ENCODE measurements at regions of chr15 and their contacts with region 1.

Region 1: GRCh38 chr15:26382444-26383075 is 390.3 kb downstream of the GABRB3 start:
- DNase-seq: no peak
- ATAC-seq: no peak
- H3K4me3 ChIP-seq: no peak overlapping the region
- H3K27ac ChIP-seq: no peak overlapping the region
- H3K4me1 ChIP-seq: no peaks in the 10 kb centered on the region
- H3K27me3 ChIP-seq: no peaks in the 10 kb centered on the region; a peak in 1 of 5 replicates
- CTCF ChIP-seq: no peak
- EP300 ChIP-seq: no peak
- POLR2A ChIP-seq: no peak
- RAD21 ChIP-seq: no peak

Region 2: DNA sequence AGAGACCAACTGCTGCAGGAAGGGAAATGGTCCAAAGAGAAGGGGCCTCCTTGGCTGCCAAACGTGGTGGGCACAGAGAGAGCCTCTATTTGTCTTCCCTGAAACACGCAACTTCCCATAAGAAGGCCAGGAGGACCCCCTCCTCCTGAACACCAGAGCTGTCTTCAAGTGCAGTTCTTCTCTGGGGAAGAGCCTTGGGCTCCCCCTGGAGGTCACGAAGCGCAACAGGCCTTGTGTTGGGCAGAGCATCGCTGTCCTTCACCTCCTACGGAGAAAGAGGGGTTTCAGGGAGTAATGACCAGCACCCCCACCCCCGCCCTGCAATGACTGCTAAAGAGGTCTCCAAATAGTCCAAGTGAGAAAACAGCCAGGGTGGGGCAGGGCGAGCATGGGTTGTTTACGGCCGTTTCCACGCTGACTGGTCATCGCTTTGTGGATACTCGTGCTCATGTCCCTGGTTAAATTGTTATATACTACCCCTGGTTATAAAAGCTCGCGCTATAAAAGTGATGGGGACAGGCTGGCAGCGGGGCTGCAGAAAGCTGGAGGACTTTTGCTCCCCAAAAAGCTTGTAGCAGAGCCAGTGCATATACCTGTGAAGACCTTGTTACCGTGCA is 121.9 kb before region 1 on chr15:
- CTCF ChIA-PET with region 1: no interaction called
- POLR2A ChIA-PET with region 1: no interaction called
- in situ Hi-C with region 1: no loop called
- intact Hi-C with region 1: no loop called
- DNase-seq: peak; percentile 41 to 55 (median 48)
- ATAC-seq: peak; percentile 93
- H3K4me3 ChIP-seq: no peak overlapping the region
- H3K27ac ChIP-seq: no peak overlapping the region
- H3K4me1 ChIP-seq: no peaks in the 10 kb centered on the region
- H3K27me3 ChIP-seq: no peaks in the 10 kb centered on the region
- CTCF ChIP-seq: peak; percentile 60 to 75 (median 71)
- EP300 ChIP-seq: no peak
- POLR2A ChIP-seq: no peak
- RAD21 ChIP-seq: peak; percentile 44 to 62

Region 3: DNA sequence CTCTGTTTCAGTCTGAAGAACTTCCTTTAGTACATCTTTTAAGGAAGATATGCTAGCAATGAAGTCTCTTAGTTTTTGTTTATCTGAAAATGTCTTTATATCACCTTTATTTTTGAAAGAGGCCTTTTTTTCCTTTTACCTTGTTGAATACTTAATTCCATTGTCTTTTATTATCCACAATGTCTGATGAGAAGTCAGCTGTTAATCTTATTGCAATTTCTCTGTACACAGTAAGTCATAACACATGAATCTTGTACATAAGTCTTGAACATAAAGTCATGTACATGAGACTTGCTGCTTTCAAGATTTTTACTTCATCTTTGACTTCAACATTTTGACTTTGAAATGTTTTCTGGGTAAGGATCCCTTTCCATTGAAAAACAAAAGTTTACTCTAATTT is 95.2 kb before region 1 on chr15:
- CTCF ChIA-PET with region 1: no interaction called
- POLR2A ChIA-PET with region 1: no interaction called
- in situ Hi-C with region 1: no loop called
- intact Hi-C with region 1: no loop called
- DNase-seq: no peak
- ATAC-seq: no peak
- H3K4me3 ChIP-seq: no peak overlapping the region
- H3K27ac ChIP-seq: no peak overlapping the region
- H3K4me1 ChIP-seq: no peaks in the 10 kb centered on the region
- H3K27me3 ChIP-seq: no peaks in the 10 kb centered on the region
- CTCF ChIP-seq: no peak
- EP300 ChIP-seq: no peak
- POLR2A ChIP-seq: no peak
- RAD21 ChIP-seq: no peak

Region 4: GRCh38 chr15:26449291-26449690 is 66.7 kb after region 1 on chr15:
- CTCF ChIA-PET with region 1: no interaction called
- POLR2A ChIA-PET with region 1: no interaction called
- in situ Hi-C with region 1: no loop called
- intact Hi-C with region 1: loop called (anchors 10 kb)
- DNase-seq: no peak
- ATAC-seq: no peak
- H3K4me3 ChIP-seq: no peak overlapping the region
- H3K27ac ChIP-seq: no peak overlapping the region
- H3K4me1 ChIP-seq: no peaks in the 10 kb centered on the region
- H3K27me3 ChIP-seq: no peaks in the 10 kb centered on the region
- CTCF ChIP-seq: no peak
- EP300 ChIP-seq: no peak
- POLR2A ChIP-seq: no peak
- RAD21 ChIP-seq: no peak

Measured in K562 (cell line).